HEK293 (cell line): ENCODE measurements at regions of chr11 and their contacts with region 1.

Region 1: GRCh38 chr11:129785383-129786111 is 30.1 kb upstream of the TMEM45B start:
- H3K4me3 ChIP-seq: no peak overlapping the region
- H3K27ac ChIP-seq: no peak overlapping the region
- H3K4me1 ChIP-seq: no peaks in the 10 kb centered on the region
- CTCF ChIP-seq: no peak

Region 2: GRCh38 chr11:129703846-129704245 is 81.7 kb before region 1 on chr11:
- CTCF ChIA-PET with region 1: no interaction called
- POLR2A ChIA-PET with region 1: no interaction called
- H3K4me3 ChIP-seq: no peak overlapping the region
- H3K27ac ChIP-seq: no peak overlapping the region
- H3K4me1 ChIP-seq: no peaks in the 10 kb centered on the region
- CTCF ChIP-seq: no peak

Region 3: DNA sequence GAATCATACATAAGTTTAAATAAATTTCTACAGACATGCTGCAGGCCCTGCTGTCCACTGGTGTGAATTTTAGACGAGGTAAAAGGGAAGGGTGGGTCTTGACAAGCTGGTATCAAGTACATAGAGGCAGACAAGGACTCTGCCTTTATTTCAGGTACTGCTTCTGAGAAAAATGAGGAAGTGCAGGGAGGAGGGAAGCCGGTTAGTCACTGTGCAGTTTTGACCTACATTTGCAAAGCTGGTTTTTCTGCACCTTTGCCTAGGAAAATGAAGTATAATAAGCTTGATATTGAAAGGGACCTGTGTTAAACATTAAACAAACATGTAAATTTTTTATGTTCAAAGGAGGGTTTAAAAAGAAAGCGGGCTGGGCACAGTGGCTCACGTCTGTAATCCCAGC is 54.7 kb after region 1 on chr11:
- CTCF ChIA-PET with region 1: no interaction called
- POLR2A ChIA-PET with region 1: no interaction called
- H3K4me3 ChIP-seq: no peak overlapping the region
- H3K27ac ChIP-seq: no peak overlapping the region
- H3K4me1 ChIP-seq: no peaks in the 10 kb centered on the region
- CTCF ChIP-seq: no peak

Region 4: DNA sequence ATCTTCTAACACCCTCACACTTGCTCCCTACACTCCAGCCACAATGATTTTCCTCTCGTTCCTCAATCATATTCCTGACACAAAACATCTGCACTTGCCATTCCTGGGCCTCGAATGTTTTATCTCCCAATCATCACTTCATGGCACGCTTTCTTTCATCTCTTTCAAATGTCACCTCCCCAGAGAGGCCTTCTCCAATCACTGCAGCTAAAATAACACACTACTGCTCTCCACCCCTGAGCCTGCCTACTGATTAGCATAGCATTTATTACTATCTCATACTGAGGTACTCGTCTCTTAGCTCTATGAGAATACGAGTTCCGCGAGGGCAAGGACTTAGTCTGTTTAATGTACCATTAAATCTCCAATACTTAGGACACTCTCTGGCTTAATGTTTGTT is 86.4 kb after region 1 on chr11:
- CTCF ChIA-PET with region 1: interaction called, 20 read pairs
- POLR2A ChIA-PET with region 1: no interaction called
- H3K4me3 ChIP-seq: no peak overlapping the region
- H3K27ac ChIP-seq: no peak overlapping the region
- H3K4me1 ChIP-seq: no peaks in the 10 kb centered on the region
- CTCF ChIP-seq: no peak